ENCODE measurements at regions of chr9 and their contacts with region 1.

Region 1: DNA sequence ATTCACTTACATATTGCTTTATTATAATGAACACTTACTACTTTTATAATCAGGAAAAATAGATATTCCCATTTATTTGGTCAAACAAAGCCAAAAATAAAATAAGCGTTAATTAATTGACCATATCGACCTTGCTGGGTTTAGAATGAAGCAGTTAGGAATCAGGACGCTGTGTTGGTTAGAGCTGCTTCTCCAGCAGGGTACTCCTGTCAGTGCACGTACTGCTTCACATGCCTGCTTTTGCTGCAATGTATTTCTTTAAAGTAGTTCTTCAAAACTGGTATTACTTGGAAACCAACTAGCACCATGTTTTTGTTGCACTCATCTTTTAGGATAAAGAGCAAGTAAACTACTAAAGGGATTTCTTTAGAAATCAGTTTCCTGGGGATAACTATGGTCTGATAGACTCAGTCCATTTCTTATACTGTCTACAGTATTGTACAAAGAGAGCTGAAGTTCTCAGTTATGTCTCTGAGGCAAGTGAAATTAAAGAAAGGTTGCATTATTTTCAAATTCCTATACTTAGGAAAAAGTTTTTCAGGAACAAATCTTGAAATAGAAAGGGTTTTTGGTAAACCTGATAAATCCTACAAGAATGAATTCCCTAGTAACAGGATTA is 6.8 kb upstream of the TRMO start:
- DNase-seq: no peak
- H3K4me3 ChIP-seq: no peak overlapping the region
- H3K27ac ChIP-seq: no peak overlapping the region
- H3K4me1 ChIP-seq: peaks cover 0 to 3% of the 10 kb centered on the region in 2 donors
- H3K27me3 ChIP-seq: no peaks in the 10 kb centered on the region
- CTCF ChIP-seq: no peak
- POLR2A ChIP-seq: no peak

Region 2: DNA sequence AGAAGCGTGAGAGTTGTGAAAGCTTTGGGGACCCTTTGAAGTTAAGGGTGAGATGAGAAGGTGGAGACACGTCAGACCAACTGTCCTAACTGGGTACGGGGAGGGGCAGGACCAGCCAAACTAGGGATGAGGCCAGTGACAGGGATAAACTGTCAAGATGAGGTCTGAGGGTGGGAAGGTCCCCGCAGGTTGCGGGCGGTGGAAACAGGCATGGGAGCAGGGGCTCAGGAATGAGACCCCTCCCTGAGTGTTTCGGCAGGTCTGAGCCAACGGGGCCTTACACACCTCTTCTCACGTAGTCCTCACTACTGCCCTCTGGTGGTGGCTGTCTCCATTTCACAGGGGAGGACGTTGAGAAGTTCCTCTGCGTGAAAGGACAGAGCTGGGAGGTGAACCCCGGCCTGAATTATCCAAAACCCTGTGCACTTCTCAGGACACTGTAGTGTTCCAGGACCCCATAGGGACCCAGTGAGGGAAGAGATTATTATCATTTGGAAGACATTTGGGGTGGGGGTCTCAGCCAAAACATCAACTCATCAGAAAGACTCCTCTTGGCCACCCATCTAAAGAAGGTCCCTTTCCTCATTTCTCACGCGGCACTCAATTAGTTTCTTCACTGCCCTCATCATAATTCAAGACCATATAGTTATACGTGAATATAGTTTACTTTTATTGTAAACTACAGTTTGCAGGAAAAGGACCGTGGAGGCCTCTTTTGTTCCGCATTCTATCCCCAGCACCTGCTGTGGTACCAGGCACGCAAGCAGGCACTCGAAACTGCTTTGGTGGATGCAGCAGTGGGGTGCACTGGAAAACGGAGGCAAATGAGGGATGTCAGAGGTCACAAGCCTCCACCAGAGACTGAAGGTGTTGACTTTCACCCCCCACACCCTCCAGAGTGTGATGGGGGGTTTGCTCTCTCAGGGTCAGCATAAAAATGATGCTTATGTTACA is 105.8 kb after region 1 on chr9:
- intact Hi-C with region 1: loop called (anchors 5 kb)
- DNase-seq: peak; percentile 86 to 90
- H3K4me3 ChIP-seq: no peak overlapping the region
- H3K27ac ChIP-seq: no peak overlapping the region
- H3K4me1 ChIP-seq: peaks cover 0 to 18% of the 10 kb centered on the region in 2 donors
- H3K27me3 ChIP-seq: no peaks in the 10 kb centered on the region
- CTCF ChIP-seq: peak; percentile 60 to 84 (median 74)
- POLR2A ChIP-seq: no peak

Measured in thyroid gland (tissue), 4 donors.